ENCODE measurements at regions of chr5 and their contacts with region 1.

Region 1: GRCh38 chr5:179732417-179732917 is at the start of gene MAML1:
- DNase-seq: peak; percentile 95 to 100 (median 99)
- ATAC-seq: peak; percentile 97
- H3K4me3 ChIP-seq: peak within 1 kb of the TSS; percentile 70
- H3K4me3 Mint-ChIP-seq: peak within 1 kb of the TSS; percentile 91 to 96 (median 94)
- H3K27ac ChIP-seq: peak within 1 kb of the TSS; percentile 100
- H3K27ac Mint-ChIP-seq: peak within 1 kb of the TSS; percentile 84 to 99 (median 95)
- H3K4me1 ChIP-seq: peaks cover 25 to 35% of the 10 kb centered on the region in 2 donors
- H3K4me1 Mint-ChIP-seq: peaks cover 21 to 52% (median 38%) of the 10 kb centered on the region in 7 donors
- H3K27me3 ChIP-seq: no peaks in the 10 kb centered on the region
- H3K27me3 Mint-ChIP-seq: no peaks in the 10 kb centered on the region
- total RNA-seq, gene MAML1: 26.4 to 51.2 (median 35.5) TPM

Region 2: DNA sequence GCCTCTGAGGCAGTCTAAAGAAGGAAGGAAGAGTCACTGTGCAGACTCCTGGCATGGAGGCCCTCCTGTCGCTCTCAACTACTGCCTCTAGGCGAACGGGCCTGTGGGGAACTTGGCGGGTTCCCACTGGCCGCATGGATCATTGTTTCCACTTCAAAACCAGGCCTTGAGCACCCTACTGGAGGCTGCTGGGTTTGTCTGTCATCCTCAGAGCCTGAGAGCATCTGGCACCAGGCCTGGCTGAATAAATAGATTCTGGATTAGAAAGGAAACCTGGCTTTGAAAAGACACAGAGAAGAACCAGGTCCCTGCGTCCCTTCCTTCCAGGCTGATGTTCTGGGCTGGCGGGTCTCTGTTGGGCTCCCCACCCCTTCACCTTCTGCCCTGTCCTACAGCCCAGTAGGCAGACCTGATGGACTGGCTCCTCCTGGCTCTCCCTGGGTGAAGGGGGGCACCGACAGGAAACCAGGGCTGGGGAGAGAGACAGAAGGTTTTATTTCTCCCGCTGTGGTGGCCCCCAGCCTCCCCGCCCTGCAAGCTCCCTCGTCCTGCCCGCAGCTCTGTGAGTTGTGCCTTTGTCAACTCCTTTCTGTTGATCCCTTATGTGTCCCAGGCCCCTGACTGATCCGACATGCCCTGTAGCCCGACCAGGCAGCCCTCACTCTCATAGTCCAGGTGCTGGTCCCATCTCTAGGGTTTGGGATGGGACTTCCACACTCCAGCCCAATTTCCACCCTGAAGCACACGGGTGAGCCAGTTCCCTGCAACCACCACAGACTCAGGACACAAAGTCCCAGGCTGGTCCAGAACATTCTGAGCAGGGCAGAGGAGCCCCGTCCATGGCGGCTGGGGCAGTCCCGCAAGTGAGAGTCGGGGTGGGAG is 437.3 kb before region 1 on chr5:
- CTCF ChIA-PET with region 1: no interaction called
- POLR2A ChIA-PET with region 1: no interaction called
- intact Hi-C with region 1: no loop called
- DNase-seq: no peak
- ATAC-seq: no peak
- H3K4me3 ChIP-seq: no peak overlapping the region
- H3K4me3 Mint-ChIP-seq: no peak overlapping the region
- H3K27ac ChIP-seq: no peak overlapping the region
- H3K27ac Mint-ChIP-seq: no peak overlapping the region
- H3K4me1 ChIP-seq: no peaks in the 10 kb centered on the region
- H3K4me1 Mint-ChIP-seq: no peaks in the 10 kb centered on the region
- H3K27me3 ChIP-seq: no peaks in the 10 kb centered on the region
- H3K27me3 Mint-ChIP-seq: peaks cover 0 to 20% (median 4%) of the 10 kb centered on the region in 5 donors

Region 3: DNA sequence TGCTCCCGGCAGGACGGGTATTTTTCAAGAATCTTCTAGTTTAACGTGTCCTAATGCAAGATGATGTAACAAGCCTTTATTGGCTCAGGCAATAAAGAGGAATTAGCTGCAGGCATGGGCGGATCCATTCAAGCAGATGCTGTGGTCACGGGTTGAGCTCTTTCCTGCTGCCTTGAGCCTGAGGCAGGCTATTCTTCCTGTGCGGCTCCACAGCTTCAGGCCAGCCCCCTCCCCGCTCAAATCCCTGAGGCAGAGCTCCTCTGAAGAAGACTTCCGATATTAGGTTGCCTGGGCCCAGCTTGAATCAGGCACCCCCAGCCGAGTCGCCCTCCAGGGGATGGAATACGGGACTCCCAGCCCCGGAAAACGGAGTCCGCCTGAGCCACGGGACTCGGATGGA is 277.2 kb before region 1 on chr5:
- CTCF ChIA-PET with region 1: no interaction called
- POLR2A ChIA-PET with region 1: no interaction called
- intact Hi-C with region 1: no loop called
- DNase-seq: no peak
- ATAC-seq: no peak
- H3K4me3 ChIP-seq: no peak overlapping the region
- H3K4me3 Mint-ChIP-seq: peak overlapping the region in 1 of 10 donors; percentile 49
- H3K27ac ChIP-seq: no peak overlapping the region
- H3K27ac Mint-ChIP-seq: no peak overlapping the region
- H3K4me1 ChIP-seq: no peaks in the 10 kb centered on the region
- H3K4me1 Mint-ChIP-seq: peaks cover 0 to 6% (median 0%) of the 10 kb centered on the region in 7 donors
- H3K27me3 ChIP-seq: no peaks in the 10 kb centered on the region
- H3K27me3 Mint-ChIP-seq: peaks cover 0 to 33% (median 5%) of the 10 kb centered on the region in 5 donors

Region 4: GRCh38 chr5:179550511-179551230 is 181.8 kb before region 1 on chr5 and contains the start of gene RUFY1:
- CTCF ChIA-PET with region 1: no interaction called
- POLR2A ChIA-PET with region 1: interaction called, 4 read pairs
- intact Hi-C with region 1: loop called (anchors 2 kb)
- DNase-seq: peak; percentile 74 to 92 (median 87)
- ATAC-seq: peak; percentile 90
- H3K4me3 ChIP-seq: peak within 1 kb of the TSS; percentile 84
- H3K4me3 Mint-ChIP-seq: peak within 1 kb of the TSS; percentile 94 to 99 (median 96)
- H3K27ac ChIP-seq: peak within 1 kb of the TSS; percentile 87
- H3K27ac Mint-ChIP-seq: peak within 1 kb of the TSS; percentile 91 to 99 (median 98)
- H3K4me1 ChIP-seq: peaks cover 12 to 15% of the 10 kb centered on the region in 2 donors
- H3K4me1 Mint-ChIP-seq: peaks cover 10 to 49% (median 35%) of the 10 kb centered on the region in 7 donors
- H3K27me3 ChIP-seq: no peaks in the 10 kb centered on the region
- H3K27me3 Mint-ChIP-seq: peaks cover 0 to 4% (median 0%) of the 10 kb centered on the region in 5 donors
- total RNA-seq, gene RUFY1: 31.8 to 63.0 (median 52.3) TPM

Region 5: GRCh38 chr5:179678223-179679013 is 54.0 kb before region 1 on chr5:
- CTCF ChIA-PET with region 1: interaction called, 3 read pairs
- POLR2A ChIA-PET with region 1: interaction called, 6 read pairs
- intact Hi-C with region 1: loop called (anchors 1 kb)
- DNase-seq: peak; percentile 88 to 95 (median 92)
- ATAC-seq: peak; percentile 91
- H3K4me3 ChIP-seq: peak overlapping the region; percentile 99
- H3K4me3 Mint-ChIP-seq: peak overlapping the region; percentile 95 to 99 (median 98)
- H3K27ac ChIP-seq: peak overlapping the region; percentile 87
- H3K27ac Mint-ChIP-seq: peak overlapping the region; percentile 89 to 99 (median 97)
- H3K4me1 ChIP-seq: peaks cover 4 to 5% of the 10 kb centered on the region in 2 donors
- H3K4me1 Mint-ChIP-seq: peaks cover 15 to 39% (median 30%) of the 10 kb centered on the region in 7 donors
- H3K27me3 ChIP-seq: no peaks in the 10 kb centered on the region
- H3K27me3 Mint-ChIP-seq: peaks cover 0 to 5% (median 0%) of the 10 kb centered on the region in 5 donors

Region 6: GRCh38 chr5:179720222-179720621 is 12.2 kb before region 1 on chr5:
- CTCF ChIA-PET with region 1: no interaction called
- POLR2A ChIA-PET with region 1: interaction called, 13 read pairs
- intact Hi-C with region 1: no loop called
- DNase-seq: no peak
- ATAC-seq: no peak
- H3K4me3 ChIP-seq: no peak overlapping the region
- H3K4me3 Mint-ChIP-seq: no peak overlapping the region
- H3K27ac ChIP-seq: no peak overlapping the region
- H3K27ac Mint-ChIP-seq: peak overlapping the region in 2 of 9 donors; percentile 19 to 39
- H3K4me1 ChIP-seq: no peaks in the 10 kb centered on the region
- H3K4me1 Mint-ChIP-seq: peaks cover 0 to 27% (median 9%) of the 10 kb centered on the region in 7 donors
- H3K27me3 ChIP-seq: no peaks in the 10 kb centered on the region
- H3K27me3 Mint-ChIP-seq: no peaks in the 10 kb centered on the region

Region 7: DNA sequence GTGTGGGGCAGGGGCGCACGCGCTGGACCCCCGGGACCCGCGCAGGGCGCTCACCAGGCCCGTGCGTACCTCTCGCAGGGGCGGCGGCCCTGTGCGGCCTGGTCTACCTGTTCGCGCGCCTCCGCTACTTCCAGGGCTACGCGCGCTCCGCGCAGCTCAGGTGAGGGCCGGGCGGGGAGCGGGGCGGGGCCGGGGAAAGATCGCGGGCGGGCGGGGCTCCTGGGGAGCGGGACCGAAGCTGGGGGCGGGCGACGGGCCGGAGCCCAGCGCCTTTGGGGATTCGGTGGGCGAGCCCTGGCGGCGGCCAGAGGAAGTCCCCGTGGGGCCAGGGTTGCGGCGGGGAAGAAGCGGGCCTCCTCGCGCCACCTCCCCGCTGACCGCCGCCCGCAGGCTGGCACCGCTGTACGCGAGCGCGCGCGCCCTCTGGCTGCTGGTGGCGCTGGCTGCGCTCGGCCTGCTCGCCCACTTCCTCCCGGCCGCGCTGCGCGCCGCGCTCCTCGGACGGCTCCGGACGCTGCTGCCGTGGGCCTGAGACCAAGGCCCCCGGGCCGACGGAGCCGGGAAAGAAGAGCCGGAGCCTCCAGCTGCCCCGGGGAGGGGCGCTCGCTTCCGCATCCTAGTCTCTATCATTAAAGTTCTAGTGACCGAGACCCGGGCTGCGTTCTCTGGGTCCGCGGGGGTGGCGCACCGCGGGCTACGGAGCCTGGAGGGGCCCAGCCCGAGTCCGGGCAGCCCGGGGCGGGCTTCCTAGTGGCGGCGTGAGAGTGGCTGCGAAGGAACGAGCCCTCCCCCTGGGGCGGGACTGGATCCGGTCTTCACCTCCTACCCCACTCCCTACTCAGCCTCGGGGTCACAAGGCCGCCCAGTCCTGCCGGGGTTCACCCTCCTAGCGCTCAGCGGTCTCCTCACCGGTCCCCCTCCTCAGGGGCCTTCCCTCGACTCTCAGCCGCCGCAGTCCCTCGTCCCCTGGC is 63.7 kb after region 1 on chr5:
- CTCF ChIA-PET with region 1: interaction called, 3 read pairs
- POLR2A ChIA-PET with region 1: interaction called, 8 read pairs
- intact Hi-C with region 1: loop called (anchors 1 to 2 kb)
- DNase-seq: peak; percentile 37 to 81 (median 65)
- ATAC-seq: peak; percentile 84
- H3K4me3 ChIP-seq: peak overlapping the region; percentile 48
- H3K4me3 Mint-ChIP-seq: peak overlapping the region; percentile 40 to 78 (median 64)
- H3K27ac ChIP-seq: peak overlapping the region; percentile 68
- H3K27ac Mint-ChIP-seq: peak overlapping the region in 4 of 9 donors; percentile 17 to 80 (median 33)
- H3K4me1 ChIP-seq: peaks cover 24 to 28% of the 10 kb centered on the region in 2 donors
- H3K4me1 Mint-ChIP-seq: peaks cover 20 to 33% (median 30%) of the 10 kb centered on the region in 7 donors
- H3K27me3 ChIP-seq: no peaks in the 10 kb centered on the region
- H3K27me3 Mint-ChIP-seq: no peaks in the 10 kb centered on the region

Region 8: GRCh38 chr5:179827680-179828079 is 95.2 kb after region 1 on chr5:
- CTCF ChIA-PET with region 1: no interaction called
- POLR2A ChIA-PET with region 1: no interaction called
- intact Hi-C with region 1: no loop called
- DNase-seq: no peak
- ATAC-seq: peak; percentile 79
- H3K4me3 ChIP-seq: no peak overlapping the region
- H3K4me3 Mint-ChIP-seq: no peak overlapping the region
- H3K27ac ChIP-seq: no peak overlapping the region
- H3K27ac Mint-ChIP-seq: peak overlapping the region in 7 of 9 donors; percentile 38 to 82 (median 67)
- H3K4me1 ChIP-seq: peaks cover 4 to 7% of the 10 kb centered on the region in 2 donors
- H3K4me1 Mint-ChIP-seq: peaks cover 11 to 41% (median 26%) of the 10 kb centered on the region in 7 donors
- H3K27me3 ChIP-seq: no peaks in the 10 kb centered on the region
- H3K27me3 Mint-ChIP-seq: no peaks in the 10 kb centered on the region

Region 9: DNA sequence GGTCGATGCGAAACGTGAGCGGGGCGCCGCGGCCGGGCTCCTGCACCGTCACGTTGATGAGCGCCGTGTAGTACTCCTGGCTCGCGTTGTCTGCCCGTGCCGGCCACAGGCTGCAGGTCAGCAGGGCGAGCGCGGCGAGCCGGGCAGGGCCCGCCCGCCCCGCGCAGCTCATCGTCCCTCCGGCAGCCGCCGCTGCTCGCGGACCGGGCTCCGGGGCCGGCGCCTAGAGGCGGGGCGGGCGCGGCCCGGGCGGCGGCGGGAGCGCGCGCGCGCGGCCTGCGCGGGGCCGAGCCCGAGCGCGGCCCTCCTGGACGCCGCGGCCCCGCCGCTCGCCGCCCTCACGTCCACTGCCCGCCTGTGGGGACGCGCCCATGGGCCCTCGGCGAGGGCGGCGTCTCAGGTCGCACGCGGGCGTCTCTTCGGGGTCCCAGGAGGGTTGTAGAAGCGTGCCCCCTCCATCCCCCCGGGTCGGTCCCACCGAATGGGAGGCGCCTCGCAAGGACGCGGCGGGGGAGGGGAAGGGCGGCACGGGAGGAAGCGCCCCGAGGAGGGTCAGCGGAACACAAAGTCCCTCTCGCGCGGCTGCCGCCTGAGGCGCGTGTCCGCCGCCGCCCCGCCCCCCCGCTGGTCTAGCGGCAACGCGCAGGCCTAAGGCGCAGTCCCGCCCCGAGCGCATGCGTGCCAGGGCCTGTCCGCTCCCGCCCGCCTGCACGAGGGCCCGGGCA is 339.2 kb after region 1 on chr5 and contains the start of gene RNF130:
- CTCF ChIA-PET with region 1: no interaction called
- POLR2A ChIA-PET with region 1: no interaction called
- intact Hi-C with region 1: loop called in 1 of 2 experiments (anchors 1 kb)
- DNase-seq: peak; percentile 64 to 91 (median 77)
- ATAC-seq: peak; percentile 88
- H3K4me3 ChIP-seq: peak within 1 kb of the TSS; percentile 62
- H3K4me3 Mint-ChIP-seq: peak within 1 kb of the TSS; percentile 80 to 93 (median 91)
- H3K27ac ChIP-seq: peak within 1 kb of the TSS; percentile 76
- H3K27ac Mint-ChIP-seq: peak within 1 kb of the TSS in 8 of 9 donors; percentile 78 to 95 (median 90)
- H3K4me1 ChIP-seq: peaks cover 6 to 21% of the 10 kb centered on the region in 2 donors
- H3K4me1 Mint-ChIP-seq: peaks cover 10 to 47% (median 38%) of the 10 kb centered on the region in 7 donors
- H3K27me3 ChIP-seq: no peaks in the 10 kb centered on the region
- H3K27me3 Mint-ChIP-seq: peaks cover 0 to 50% (median 0%) of the 10 kb centered on the region in 5 donors
- total RNA-seq, gene RNF130: 3.6 to 76.3 (median 23.3) TPM

Region 10: DNA sequence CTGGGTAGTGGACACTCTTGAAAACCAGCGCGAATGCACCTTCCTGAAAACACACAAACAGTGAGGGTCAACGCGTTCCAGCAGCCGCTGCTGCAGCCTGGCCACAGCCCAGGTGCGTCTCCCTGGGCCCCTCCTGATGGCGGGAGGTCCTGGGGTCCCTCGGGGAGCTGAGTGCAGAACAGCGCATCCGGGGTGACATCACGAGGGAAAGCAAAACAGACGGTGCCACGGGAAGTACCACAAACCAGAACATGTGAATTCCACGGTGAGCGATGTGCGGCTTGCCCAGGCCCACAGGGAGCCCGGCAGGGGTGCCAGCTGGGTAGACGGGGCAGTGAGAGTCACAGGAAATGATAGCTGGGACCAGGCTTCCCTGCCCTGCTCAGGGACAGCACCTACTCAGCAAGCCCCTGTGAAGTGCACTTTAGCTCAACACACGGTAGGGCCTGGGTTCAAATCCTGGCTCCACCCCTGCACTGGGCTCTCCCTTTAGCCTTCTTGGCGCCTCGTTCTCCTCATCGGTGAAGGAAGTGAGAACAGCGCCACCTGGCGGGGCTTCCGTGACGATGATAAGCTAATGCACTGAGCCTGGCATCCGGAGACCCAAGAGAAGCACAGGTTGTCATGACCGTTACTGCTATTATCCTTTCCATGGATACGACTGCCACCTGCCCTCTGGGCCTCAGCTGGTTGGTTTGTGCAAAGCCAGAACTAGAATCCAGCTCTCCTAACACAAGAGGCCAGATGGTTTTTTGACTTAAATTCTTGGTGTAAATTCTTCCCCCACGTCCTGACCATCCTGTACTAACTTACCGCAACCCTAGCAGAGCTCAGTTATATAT is 596.0 kb after region 1 on chr5:
- CTCF ChIA-PET with region 1: no interaction called
- POLR2A ChIA-PET with region 1: no interaction called
- intact Hi-C with region 1: no loop called
- DNase-seq: peak; percentile 60 to 79 (median 75)
- ATAC-seq: peak; percentile 91
- H3K4me3 ChIP-seq: no peak overlapping the region
- H3K4me3 Mint-ChIP-seq: no peak overlapping the region
- H3K27ac ChIP-seq: no peak overlapping the region
- H3K27ac Mint-ChIP-seq: no peak overlapping the region
- H3K4me1 ChIP-seq: no peaks in the 10 kb centered on the region
- H3K4me1 Mint-ChIP-seq: peaks cover 0 to 3% (median 0%) of the 10 kb centered on the region in 7 donors
- H3K27me3 ChIP-seq: no peaks in the 10 kb centered on the region
- H3K27me3 Mint-ChIP-seq: peaks cover 4 to 19% (median 9%) of the 10 kb centered on the region in 5 donors

Measured in naive thymus-derived CD4-positive, alpha-beta T cell (primary cell).